Dendritic cell treated with granulocyte-macrophage colony-stimulating factor and Interleukin-4, amounts not matched to agents 40 ng/mL and 50 ng/mL, for 4 days (primary cell): ENCODE measurements at regions of chr1 and their contacts with region 1.

Region 1: DNA sequence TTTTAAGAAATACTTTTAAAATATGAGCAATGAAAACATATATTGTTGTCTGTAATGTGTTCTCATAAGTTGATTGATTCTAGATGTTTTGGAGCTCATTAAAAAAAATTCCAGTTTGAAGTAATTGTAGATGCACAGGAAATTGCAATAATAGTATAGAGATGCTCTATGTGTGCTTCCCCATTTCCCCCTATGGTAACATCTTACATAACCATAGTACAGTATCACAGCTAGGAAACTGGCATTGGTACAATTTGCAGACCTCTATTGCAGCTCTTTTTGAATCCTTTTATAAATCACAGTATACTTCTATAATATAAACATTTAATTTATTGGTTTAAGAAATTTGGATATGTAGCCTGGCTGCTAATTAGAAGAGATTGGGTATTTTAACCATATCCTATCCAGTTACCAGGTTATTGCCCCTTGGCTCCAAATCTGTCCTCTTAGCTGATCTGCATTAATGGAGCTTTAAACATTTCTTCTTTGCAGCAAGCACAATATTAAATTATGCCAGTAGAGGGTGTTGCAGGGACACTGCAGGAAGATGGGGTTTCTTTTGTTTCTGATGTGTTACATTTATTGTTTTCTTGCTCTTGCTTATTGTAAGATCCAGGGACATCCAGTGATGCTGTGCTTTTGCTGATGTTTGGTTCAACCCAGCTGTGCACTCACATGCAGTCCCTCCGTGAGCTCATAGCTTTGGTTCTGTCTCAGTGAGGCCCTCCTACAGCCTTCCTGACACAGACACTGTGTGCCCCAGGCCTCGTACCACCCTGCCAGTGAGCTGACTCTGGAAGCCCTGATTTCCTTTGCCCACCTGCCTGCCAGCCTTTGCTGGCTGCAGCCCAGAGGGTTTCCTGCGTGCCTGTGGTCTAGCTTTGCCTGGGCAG is 103.3 kb downstream of the RABGAP1L start:
- H3K4me3 Mint-ChIP-seq: no peak overlapping the region
- H3K27ac Mint-ChIP-seq: no peak overlapping the region
- H3K4me1 Mint-ChIP-seq: peaks cover 8% of the 10 kb centered on the region
- H3K27me3 Mint-ChIP-seq: no peaks in the 10 kb centered on the region

Region 2: DNA sequence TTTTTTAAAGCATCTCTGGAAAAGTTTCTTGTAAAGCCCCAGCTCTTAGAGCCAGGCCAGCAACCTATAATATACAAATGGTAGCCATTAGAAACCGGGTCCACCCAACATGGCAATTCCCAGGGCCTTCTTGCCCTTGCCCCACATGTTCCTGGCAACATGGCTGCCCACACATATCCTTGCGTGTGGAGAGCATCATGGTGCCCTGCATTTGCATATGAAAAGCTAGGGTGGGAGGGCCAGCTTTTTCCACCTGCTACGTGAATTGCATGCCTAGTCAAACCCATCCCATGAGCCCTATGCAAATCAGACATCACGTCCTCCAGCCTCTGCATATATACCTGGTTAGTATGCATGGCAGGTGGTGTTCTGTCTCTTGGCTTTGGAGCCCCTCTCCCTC is 15.1 kb before region 1 on chr1:
- intact Hi-C with region 1: no loop called
- H3K4me3 Mint-ChIP-seq: no peak overlapping the region
- H3K27ac Mint-ChIP-seq: no peak overlapping the region
- H3K4me1 Mint-ChIP-seq: no peaks in the 10 kb centered on the region
- H3K27me3 Mint-ChIP-seq: no peaks in the 10 kb centered on the region

Region 3: GRCh38 chr1:174726167-174726879 is 463.7 kb after region 1 on chr1:
- intact Hi-C with region 1: loop called (anchors 5 kb)
- H3K4me3 Mint-ChIP-seq: no peak overlapping the region
- H3K27ac Mint-ChIP-seq: no peak overlapping the region
- H3K4me1 Mint-ChIP-seq: no peaks in the 10 kb centered on the region
- H3K27me3 Mint-ChIP-seq: no peaks in the 10 kb centered on the region

Region 4: DNA sequence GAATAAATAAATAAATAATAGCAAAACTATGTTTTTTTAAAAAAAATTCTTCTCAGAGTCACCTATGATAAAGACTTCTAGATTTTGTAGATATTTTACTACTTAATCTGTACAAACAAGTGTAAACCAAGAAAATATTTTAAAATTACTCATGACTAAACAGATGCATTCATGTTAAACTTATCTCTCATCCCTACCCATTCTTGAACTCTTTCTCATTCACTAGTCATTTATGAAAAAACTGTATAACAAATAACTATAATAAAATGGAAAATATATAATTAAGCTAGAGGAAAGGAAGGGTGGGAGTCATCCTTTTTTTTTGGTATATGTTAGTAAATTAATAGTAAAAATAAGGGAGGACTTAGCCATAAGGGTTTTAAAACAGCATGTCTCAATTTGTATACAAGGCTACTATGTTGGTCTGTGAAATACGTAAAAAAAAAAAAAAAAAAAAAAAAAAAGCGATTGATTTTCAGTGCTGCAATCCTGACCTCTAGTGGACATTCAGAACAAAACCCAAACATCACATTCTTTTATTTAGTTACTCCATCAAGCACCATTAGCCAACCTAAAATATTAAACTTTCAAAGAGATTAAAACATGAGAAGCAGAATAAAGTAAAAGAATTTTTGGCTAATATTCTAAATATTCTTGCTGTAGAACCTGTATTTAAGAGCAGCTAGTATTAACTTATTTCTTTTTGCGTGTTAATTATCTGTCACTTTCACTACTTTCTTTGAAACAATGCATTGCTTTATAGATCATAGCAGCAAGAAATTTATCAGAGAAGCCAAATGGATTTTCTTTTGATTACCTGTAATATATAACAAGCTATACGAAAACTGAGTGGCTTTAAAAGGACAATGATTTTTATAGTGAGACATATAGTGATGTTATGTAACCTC is 481.3 kb after region 1 on chr1:
- intact Hi-C with region 1: loop called (anchors 1 kb)
- H3K4me3 Mint-ChIP-seq: no peak overlapping the region
- H3K27ac Mint-ChIP-seq: no peak overlapping the region
- H3K4me1 Mint-ChIP-seq: peaks cover 31% of the 10 kb centered on the region
- H3K27me3 Mint-ChIP-seq: no peaks in the 10 kb centered on the region